K562 (cell line): ENCODE measurements at regions of chr11 and their contacts with region 1.

Region 1: DNA sequence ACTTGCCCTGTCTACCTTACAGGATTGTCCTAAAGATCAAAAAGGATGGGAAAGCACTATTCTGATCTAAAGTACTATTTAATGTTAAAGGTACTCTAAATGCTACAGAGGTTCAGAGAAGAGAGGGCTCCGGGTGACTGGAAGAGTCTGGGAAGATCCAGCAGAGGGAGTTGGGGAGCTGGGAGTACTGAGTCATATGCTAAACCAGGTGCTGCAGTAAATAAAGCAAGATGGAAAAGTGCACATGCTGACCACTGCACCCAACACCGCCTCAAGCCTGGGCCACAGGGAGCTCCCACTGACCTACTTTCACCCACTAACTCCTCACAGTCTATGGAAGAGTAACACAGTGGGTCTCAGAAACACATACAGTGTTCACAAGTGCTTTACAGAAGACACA is 49.3 kb downstream of the WT1 start:
- DNase-seq: peak; percentile 53 to 68 (median 60)
- ATAC-seq: peak; percentile 86
- H3K4me3 ChIP-seq: no peak overlapping the region
- H3K27ac ChIP-seq: peak overlapping the region; percentile 59
- H3K4me1 ChIP-seq: peaks cover 4 to 30% of the 10 kb centered on the region in 2 experiments
- H3K27me3 ChIP-seq: no peaks in the 10 kb centered on the region
- CTCF ChIP-seq: peak; percentile 50 to 68 (median 67)
- EP300 ChIP-seq: peak; percentile 5; the same call in 1 of the 2 replicates
- POLR2A ChIP-seq: no peak
- RAD21 ChIP-seq: peak; percentile 50 to 72

Region 2: GRCh38 chr11:32420937-32421901 is 35.2 kb after region 1 on chr11:
- CTCF ChIA-PET with region 1: no interaction called
- POLR2A ChIA-PET with region 1: interaction called, 7 read pairs
- in situ Hi-C with region 1: no loop called
- intact Hi-C with region 1: loop called (anchors 2 kb)
- DNase-seq: peak; percentile 31 to 83 (median 57)
- ATAC-seq: peak; percentile 88
- H3K4me3 ChIP-seq: peak overlapping the region; percentile 7; the same call in 1 of the 2 replicates
- H3K27ac ChIP-seq: peak overlapping the region; percentile 91
- H3K4me1 ChIP-seq: peaks cover 26 to 51% of the 10 kb centered on the region in 2 experiments
- H3K27me3 ChIP-seq: no peaks in the 10 kb centered on the region
- CTCF ChIP-seq: 0 out of 6 replicates have a peak, but pooled peaks of 1 of the 3 experiments have one; percentile 8
- EP300 ChIP-seq: peak; percentile 85
- POLR2A ChIP-seq: peak; percentile 37; the same call in 1 of the 2 replicates
- RAD21 ChIP-seq: no peak

Region 3: GRCh38 chr11:32448232-32448631 is 62.2 kb after region 1 on chr11:
- CTCF ChIA-PET with region 1: no interaction called
- POLR2A ChIA-PET with region 1: no interaction called
- in situ Hi-C with region 1: no loop called
- intact Hi-C with region 1: no loop called
- DNase-seq: peak in 3 of 4 experiments; percentile 46 to 88 (median 69)
- ATAC-seq: peak; percentile 79
- H3K4me3 ChIP-seq: no peak overlapping the region
- H3K27ac ChIP-seq: no peak overlapping the region
- H3K4me1 ChIP-seq: peaks cover 13 to 27% of the 10 kb centered on the region in 2 experiments; a peak in 4 of 5 replicates
- H3K27me3 ChIP-seq: no peaks in the 10 kb centered on the region
- CTCF ChIP-seq: peak; percentile 65 to 70 (median 70)
- EP300 ChIP-seq: no peak
- POLR2A ChIP-seq: no peak
- RAD21 ChIP-seq: peak; percentile 51 to 70